Caco-2 (cell line): ENCODE measurements at regions of chr7 and their contacts with region 1.

Region 1: DNA sequence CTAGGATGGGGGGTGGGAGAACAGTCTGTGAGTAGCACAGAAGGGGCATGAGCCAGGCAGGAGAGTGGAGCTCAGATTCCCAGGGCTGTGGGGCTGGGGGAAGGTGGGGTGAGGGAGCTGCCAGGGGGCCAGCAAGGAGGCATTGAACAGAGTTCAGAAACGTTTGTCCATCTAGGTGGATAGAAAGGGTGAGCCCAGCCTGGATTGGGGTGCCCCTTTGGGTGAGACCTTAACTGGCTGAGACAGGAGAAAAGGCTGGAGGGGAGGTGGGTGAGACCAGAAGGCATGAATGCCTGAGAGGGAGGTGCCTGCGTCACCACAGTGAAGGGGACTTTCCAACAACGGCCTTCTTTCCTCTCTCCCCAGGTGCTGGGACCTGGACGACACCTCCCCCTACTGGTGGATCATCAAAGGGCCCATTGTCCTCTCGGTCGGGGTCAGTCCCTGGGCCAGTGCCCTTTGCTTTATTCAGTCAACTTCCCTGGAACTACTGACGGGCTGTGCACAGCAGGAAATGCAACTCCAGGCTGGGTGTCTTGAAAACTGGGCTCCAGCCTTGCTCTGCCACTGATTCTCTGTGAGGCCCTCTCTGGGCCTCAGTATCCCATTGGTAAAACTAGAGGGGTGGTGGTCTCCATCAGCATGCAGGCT is 11.0 kb downstream of the GHRHR start:
- DNase-seq: peak; percentile 63 to 72
- H3K4me3 ChIP-seq: no peak overlapping the region
- H3K4me3 Mint-ChIP-seq: no peak overlapping the region
- H3K27ac Mint-ChIP-seq: no peak overlapping the region
- H3K4me1 ChIP-seq: no peaks in the 10 kb centered on the region
- H3K4me1 Mint-ChIP-seq: no peaks in the 10 kb centered on the region
- H3K27me3 ChIP-seq: no peaks in the 10 kb centered on the region
- H3K27me3 Mint-ChIP-seq: peaks cover 7% of the 10 kb centered on the region
- CTCF ChIP-seq: peak; percentile 74 to 82

Region 2: DNA sequence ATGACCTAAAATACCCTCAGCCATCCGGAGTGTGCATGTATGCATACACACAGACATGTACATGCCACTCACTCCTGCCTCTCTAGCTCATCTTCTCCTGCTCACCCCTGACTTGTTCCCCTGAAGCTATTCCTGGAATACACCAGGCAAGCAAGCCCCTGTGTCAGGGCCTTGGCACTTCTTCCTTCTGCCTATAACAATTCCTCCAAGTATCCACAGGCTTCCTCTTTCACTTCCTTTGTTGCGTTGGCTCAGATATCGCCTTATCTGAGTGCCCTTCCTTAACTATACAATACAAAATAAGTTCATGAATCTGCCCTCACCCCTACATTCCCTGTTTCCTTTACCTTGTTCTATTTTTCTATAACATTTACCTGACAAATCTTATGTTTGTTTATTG is 584.9 kb before region 1 on chr7:
- CTCF ChIA-PET with region 1: no interaction called
- POLR2A ChIA-PET with region 1: no interaction called
- intact Hi-C with region 1: no loop called
- DNase-seq: no peak
- H3K4me3 ChIP-seq: no peak overlapping the region
- H3K4me3 Mint-ChIP-seq: no peak overlapping the region
- H3K27ac Mint-ChIP-seq: no peak overlapping the region
- H3K4me1 ChIP-seq: no peaks in the 10 kb centered on the region
- H3K4me1 Mint-ChIP-seq: no peaks in the 10 kb centered on the region
- H3K27me3 ChIP-seq: no peaks in the 10 kb centered on the region
- H3K27me3 Mint-ChIP-seq: no peaks in the 10 kb centered on the region
- CTCF ChIP-seq: no peak

Region 3: GRCh38 chr7:30896783-30897637 is 77.7 kb before region 1 on chr7:
- CTCF ChIA-PET with region 1: no interaction called
- POLR2A ChIA-PET with region 1: no interaction called
- intact Hi-C with region 1: loop called (anchors 2 kb)
- DNase-seq: peak; percentile 32 to 71
- H3K4me3 ChIP-seq: no peak overlapping the region
- H3K4me3 Mint-ChIP-seq: peak overlapping the region; percentile 27
- H3K27ac Mint-ChIP-seq: peak overlapping the region; percentile 86
- H3K4me1 ChIP-seq: peaks cover 30% of the 10 kb centered on the region
- H3K4me1 Mint-ChIP-seq: peaks cover 35% of the 10 kb centered on the region
- H3K27me3 ChIP-seq: no peaks in the 10 kb centered on the region
- H3K27me3 Mint-ChIP-seq: no peaks in the 10 kb centered on the region
- CTCF ChIP-seq: no peak

Region 4: GRCh38 chr7:30938435-30939316 is 36.1 kb before region 1 on chr7:
- CTCF ChIA-PET with region 1: interaction called, 10 read pairs
- POLR2A ChIA-PET with region 1: no interaction called
- intact Hi-C with region 1: loop called (anchors 2 kb)
- DNase-seq: peak; percentile 86 to 90
- H3K4me3 ChIP-seq: no peak overlapping the region
- H3K4me3 Mint-ChIP-seq: no peak overlapping the region
- H3K27ac Mint-ChIP-seq: no peak overlapping the region
- H3K4me1 ChIP-seq: peaks cover 9% of the 10 kb centered on the region
- H3K4me1 Mint-ChIP-seq: peaks cover 17% of the 10 kb centered on the region
- H3K27me3 ChIP-seq: no peaks in the 10 kb centered on the region
- H3K27me3 Mint-ChIP-seq: no peaks in the 10 kb centered on the region
- CTCF ChIP-seq: peak; percentile 93 to 95

Region 5: DNA sequence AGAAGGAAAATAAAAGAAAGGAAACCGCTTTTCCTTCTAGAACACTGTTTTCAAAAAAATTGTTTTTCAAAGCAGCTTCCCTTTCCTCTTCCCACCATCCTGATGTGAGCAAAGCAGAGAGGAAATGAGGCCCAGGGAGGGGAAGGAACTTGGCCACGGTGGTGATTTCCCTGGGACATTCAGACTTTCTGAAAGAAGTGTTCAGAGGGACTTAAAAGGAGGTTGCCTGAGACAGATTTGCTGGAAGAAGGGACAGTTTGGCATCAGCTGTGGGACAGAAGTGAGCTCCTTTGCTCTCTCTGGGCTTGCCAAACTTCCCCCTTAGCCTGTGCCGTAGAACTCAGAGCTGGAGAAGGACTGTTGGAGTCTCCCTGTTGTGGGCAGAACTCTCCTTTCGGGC is 107.7 kb after region 1 on chr7:
- CTCF ChIA-PET with region 1: no interaction called
- POLR2A ChIA-PET with region 1: no interaction called
- intact Hi-C with region 1: no loop called
- DNase-seq: no peak
- H3K4me3 ChIP-seq: no peak overlapping the region
- H3K4me3 Mint-ChIP-seq: no peak overlapping the region
- H3K27ac Mint-ChIP-seq: no peak overlapping the region
- H3K4me1 ChIP-seq: no peaks in the 10 kb centered on the region
- H3K4me1 Mint-ChIP-seq: no peaks in the 10 kb centered on the region
- H3K27me3 ChIP-seq: peaks cover 1% of the 10 kb centered on the region
- H3K27me3 Mint-ChIP-seq: peaks cover 17% of the 10 kb centered on the region
- CTCF ChIP-seq: no peak